Common myeloid progenitor, CD34-positive (primary cell): ENCODE measurements at regions of chr5 and their contacts with region 1.

Region 1: GRCh38 chr5:50738864-50739263 is 72.4 kb downstream of the PARP8 start:
- DNase-seq: no peak
- H3K4me3 ChIP-seq: no peak overlapping the region
- H3K27ac ChIP-seq: no peak overlapping the region
- H3K4me1 ChIP-seq: peaks cover 0 to under 1% (median 0%) of the 10 kb centered on the region in 4 experiments
- H3K27me3 ChIP-seq: no peaks in the 10 kb centered on the region

Region 2: DNA sequence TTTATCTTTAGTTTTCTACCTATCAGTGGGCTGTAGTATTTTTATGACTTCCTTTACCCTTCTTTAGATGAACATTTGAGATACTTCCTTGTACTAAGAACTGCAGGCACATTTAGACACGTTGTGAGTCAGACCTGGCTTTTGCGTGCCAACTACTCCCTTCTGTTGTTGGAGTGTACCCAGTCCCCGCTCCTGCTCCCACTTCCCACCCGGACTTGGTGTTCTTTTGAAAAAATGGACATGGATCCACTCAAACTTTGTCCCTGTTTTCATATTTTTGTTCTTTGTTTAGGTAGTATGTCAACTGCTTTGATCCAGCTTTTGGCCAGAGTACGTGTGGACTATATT is 11.7 kb before region 1 on chr5:
- CTCF ChIA-PET with region 1: interaction called, 12 read pairs
- POLR2A ChIA-PET with region 1: no interaction called
- DNase-seq: peak in 1 of 3 donors; percentile 60
- H3K4me3 ChIP-seq: peak overlapping the region in 1 of 7 experiments; percentile 29
- H3K27ac ChIP-seq: no peak overlapping the region
- H3K4me1 ChIP-seq: peaks cover 0 to 17% (median 4%) of the 10 kb centered on the region in 4 experiments
- H3K27me3 ChIP-seq: no peaks in the 10 kb centered on the region

Region 3: DNA sequence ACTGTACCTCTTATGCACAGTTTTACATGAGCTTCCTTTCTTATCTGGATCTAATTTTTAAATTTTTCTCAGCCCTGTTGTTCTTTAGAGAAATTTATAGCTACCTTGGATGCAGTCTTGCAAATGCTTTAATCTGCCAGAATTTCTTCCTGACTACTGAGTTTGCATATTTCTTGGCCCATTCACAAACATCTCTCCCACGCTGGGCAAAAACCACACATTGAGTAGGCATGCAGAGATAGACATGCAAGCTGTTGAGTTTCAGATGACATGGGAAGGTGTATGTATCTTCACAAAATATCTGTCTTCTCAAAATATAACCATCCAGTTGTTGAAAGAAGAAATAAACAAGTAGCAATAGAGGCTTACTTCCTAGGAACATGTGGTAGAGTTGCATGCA is 28.7 kb after region 1 on chr5:
- CTCF ChIA-PET with region 1: no interaction called
- POLR2A ChIA-PET with region 1: no interaction called
- DNase-seq: no peak
- H3K4me3 ChIP-seq: no peak overlapping the region
- H3K27ac ChIP-seq: no peak overlapping the region
- H3K4me1 ChIP-seq: no peaks in the 10 kb centered on the region
- H3K27me3 ChIP-seq: no peaks in the 10 kb centered on the region

Region 4: DNA sequence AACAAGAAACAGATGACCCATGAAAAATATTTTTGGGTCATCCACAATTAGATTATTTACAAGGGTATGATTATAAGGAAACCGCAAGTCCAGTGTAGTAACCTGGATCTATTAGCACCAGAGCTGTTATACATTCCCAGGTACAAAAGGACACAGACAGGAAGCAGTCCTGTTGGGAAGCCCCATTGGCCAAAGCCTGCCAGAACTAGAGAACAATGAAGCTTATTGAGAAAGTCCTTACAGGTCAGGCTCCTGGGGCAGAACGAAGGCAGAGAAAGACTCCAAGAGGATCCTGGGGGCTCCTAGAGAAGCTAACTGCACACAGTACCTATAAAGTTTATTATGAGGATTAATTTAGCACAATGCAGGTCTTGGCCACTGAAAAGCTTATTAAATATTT is 97.5 kb after region 1 on chr5:
- CTCF ChIA-PET with region 1: no interaction called
- POLR2A ChIA-PET with region 1: no interaction called
- DNase-seq: no peak
- H3K4me3 ChIP-seq: no peak overlapping the region
- H3K27ac ChIP-seq: no peak overlapping the region
- H3K4me1 ChIP-seq: no peaks in the 10 kb centered on the region
- H3K27me3 ChIP-seq: no peaks in the 10 kb centered on the region